Activated CD4-positive, alpha-beta T cell treated with anti-CD3 and anti-CD28 coated beads for 36 hours (primary cell): ENCODE measurements at regions of chr17 and their contacts with region 1.

Region 1: GRCh38 chr17:27473748-27474609 is 17.7 kb downstream of the KSR1 start:
- DNase-seq: peak; percentile 93
- ATAC-seq: peak; percentile 25
- H3K4me3 Mint-ChIP-seq: peak overlapping the region; percentile 50
- H3K27ac Mint-ChIP-seq: peak overlapping the region; percentile 98
- H3K4me1 Mint-ChIP-seq: peaks cover 94% of the 10 kb centered on the region
- H3K27me3 Mint-ChIP-seq: no peaks in the 10 kb centered on the region

Region 2: DNA sequence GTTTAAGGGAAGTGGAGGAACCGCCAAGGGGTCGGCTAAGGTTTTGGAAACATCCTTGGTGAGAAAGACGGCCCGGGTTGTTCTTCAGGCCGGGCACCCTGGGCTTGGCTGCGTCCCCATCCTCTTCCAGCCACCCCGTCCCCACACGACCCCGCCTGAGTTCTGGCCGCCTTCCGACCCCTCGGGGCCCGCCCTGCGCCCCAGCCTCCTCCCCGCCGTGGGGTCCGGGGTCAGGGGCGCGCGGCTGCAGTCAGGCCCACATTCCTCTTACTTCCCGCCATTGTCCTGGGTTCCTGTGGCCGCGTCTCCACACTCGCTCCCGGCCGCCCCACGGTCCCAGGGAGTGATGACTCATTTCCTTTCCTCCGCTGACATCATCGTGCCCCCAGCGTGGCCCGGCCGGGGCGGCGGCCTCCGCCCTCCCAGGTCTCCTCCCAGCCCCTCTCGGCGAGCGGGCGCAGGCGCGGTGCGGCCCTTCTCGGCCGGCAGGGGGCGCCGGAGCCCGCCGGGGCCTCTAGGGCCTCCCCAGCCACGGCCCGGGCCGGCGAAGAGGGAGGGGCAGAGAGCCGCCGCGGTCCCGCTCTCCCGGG is 120.4 kb before region 1 on chr17:
- CTCF ChIA-PET with region 1: no interaction called
- POLR2A ChIA-PET with region 1: no interaction called
- intact Hi-C with region 1: loop called (anchors 1 to 2 kb)
- DNase-seq: peak; percentile 94
- ATAC-seq: peak; percentile 90
- H3K4me3 Mint-ChIP-seq: peak overlapping the region; percentile 85
- H3K27ac Mint-ChIP-seq: peak overlapping the region; percentile 95
- H3K4me1 Mint-ChIP-seq: peaks cover 25% of the 10 kb centered on the region
- H3K27me3 Mint-ChIP-seq: no peaks in the 10 kb centered on the region

Region 3: DNA sequence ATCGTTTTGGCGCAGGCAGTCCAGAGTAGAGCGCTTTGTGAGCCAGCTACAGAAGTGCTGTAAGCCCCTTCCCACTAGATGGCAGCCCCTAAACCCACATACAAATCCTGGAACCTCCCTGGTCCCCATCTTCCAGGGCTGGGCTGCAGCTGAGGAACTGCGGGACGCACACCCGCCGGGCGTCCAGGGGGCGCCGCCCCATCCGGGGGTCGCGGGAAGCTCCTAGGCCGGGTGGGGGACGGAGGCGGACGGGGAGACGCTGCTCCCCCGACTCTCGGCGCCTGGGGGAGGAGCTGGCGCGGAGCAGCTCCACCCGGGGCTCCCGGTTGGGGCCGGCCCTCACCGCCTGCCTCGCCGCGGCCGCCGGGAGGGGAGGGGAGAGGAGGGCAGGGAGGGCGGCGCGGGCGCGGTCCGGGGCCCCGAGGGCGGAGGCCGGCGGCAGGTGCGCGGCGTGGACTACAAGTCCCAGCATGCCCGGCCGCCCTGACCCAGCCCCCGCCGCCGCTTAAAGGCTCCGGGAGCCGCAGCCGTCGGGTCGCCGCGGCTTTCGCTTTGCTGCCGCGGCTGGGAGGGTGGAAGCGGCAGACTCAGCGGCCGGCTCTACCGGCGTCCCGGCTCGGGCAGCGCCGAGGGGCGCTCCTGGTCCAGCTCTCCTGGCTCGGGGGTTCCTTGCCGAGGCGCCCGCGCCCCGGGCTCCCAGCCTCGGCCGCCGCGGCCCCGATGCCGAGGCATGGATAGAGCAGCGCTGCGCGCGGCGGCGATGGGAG is 17.9 kb before region 1 on chr17 and contains the start of gene KSR1:
- CTCF ChIA-PET with region 1: interaction called, 7 read pairs
- POLR2A ChIA-PET with region 1: interaction called, 15 read pairs
- intact Hi-C with region 1: loop called (anchors 1 to 2 kb)
- DNase-seq: peak; percentile 92
- ATAC-seq: peak; percentile 93
- H3K4me3 Mint-ChIP-seq: peak within 1 kb of the TSS; percentile 88
- H3K27ac Mint-ChIP-seq: peak within 1 kb of the TSS; percentile 83
- H3K4me1 Mint-ChIP-seq: peaks cover 43% of the 10 kb centered on the region
- H3K27me3 Mint-ChIP-seq: peaks cover 6% of the 10 kb centered on the region
- total RNA-seq, gene KSR1: 96.6 to 113 TPM

Region 4: DNA sequence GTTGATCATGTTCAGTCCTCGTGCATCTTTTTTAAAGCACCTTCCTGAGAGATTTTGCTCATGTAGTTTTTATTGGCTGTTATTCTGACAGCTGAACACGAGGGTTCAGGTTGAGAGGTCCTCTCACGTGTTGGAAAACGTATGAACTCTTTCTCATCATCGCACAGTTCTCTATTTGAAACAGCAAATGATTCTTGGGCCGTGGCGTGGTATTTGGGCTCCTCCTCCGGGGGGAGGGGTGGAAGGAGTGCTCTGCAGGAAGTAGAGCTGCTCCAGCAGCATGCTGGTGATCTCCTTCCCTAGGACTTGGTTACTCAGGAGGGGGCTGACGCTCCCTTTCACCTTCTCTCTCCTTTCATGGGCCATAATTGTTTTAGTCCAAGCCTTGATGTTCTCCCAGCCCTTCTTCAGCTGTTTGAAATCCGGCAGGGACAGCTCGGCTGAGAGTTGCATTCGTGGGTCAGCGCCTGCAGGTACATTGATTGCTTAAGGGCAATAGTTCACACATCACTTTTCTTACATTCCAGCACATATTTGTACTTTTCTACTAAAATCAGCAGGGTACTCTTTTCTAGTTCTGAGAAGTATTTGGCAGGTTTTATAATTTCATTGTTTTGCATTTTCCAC is 52.7 kb after region 1 on chr17:
- CTCF ChIA-PET with region 1: no interaction called
- POLR2A ChIA-PET with region 1: interaction called, 3 read pairs
- intact Hi-C with region 1: loop called in 1 of 2 experiments (anchors 2 kb)
- DNase-seq: peak; percentile 80
- ATAC-seq: peak; percentile 93
- H3K4me3 Mint-ChIP-seq: no peak overlapping the region
- H3K27ac Mint-ChIP-seq: peak overlapping the region; percentile 48
- H3K4me1 Mint-ChIP-seq: peaks cover 74% of the 10 kb centered on the region
- H3K27me3 Mint-ChIP-seq: no peaks in the 10 kb centered on the region

Region 5: GRCh38 chr17:27578718-27579085 is 104.7 kb after region 1 on chr17:
- CTCF ChIA-PET with region 1: interaction called, 3 read pairs
- POLR2A ChIA-PET with region 1: interaction called, 6 read pairs
- intact Hi-C with region 1: loop called (anchors 1 kb)
- DNase-seq: peak; percentile 87
- ATAC-seq: peak; percentile 78
- H3K4me3 Mint-ChIP-seq: peak overlapping the region; percentile 27
- H3K27ac Mint-ChIP-seq: peak overlapping the region; percentile 91
- H3K4me1 Mint-ChIP-seq: peaks cover 73% of the 10 kb centered on the region
- H3K27me3 Mint-ChIP-seq: no peaks in the 10 kb centered on the region

Region 6: GRCh38 chr17:28041068-28041843 is 567.3 kb after region 1 on chr17:
- CTCF ChIA-PET with region 1: no interaction called
- POLR2A ChIA-PET with region 1: no interaction called
- intact Hi-C with region 1: loop called (anchors 5 to 10 kb)
- DNase-seq: peak; percentile 100
- ATAC-seq: peak; percentile 96
- H3K4me3 Mint-ChIP-seq: peak overlapping the region; percentile 79
- H3K27ac Mint-ChIP-seq: peak overlapping the region; percentile 74
- H3K4me1 Mint-ChIP-seq: peaks cover 52% of the 10 kb centered on the region
- H3K27me3 Mint-ChIP-seq: no peaks in the 10 kb centered on the region